WTC11 (cell line): ENCODE measurements at regions of chr13 and their contacts with region 1.

Region 1: DNA sequence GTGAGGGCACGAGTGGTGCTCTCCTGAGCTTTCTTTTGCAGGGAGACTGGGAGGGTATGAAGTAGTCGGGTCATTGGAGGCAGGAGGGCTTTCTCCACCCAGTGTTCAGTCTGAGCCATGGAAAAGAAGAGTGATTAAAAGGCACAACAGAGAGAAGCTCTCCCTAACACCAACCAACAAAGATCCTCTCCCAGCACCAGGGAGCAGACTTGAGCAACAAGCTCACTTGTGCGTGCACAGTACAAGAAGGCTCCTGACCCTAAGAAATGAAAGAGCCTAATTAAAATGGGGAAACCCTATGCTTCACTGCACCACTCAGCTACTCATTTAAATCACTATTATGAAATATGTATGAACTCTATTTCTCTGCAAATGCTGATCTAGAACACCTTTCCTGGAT is 276.3 kb upstream of the SOX21 start:
- DNase-seq: no peak
- ATAC-seq: peak; percentile 98
- H3K4me3 Mint-ChIP-seq: no peak overlapping the region
- H3K27ac Mint-ChIP-seq: no peak overlapping the region
- H3K4me1 Mint-ChIP-seq: peaks cover 34% of the 10 kb centered on the region
- H3K27me3 Mint-ChIP-seq: peaks cover 3% of the 10 kb centered on the region; the same call in 1 of the 2 replicates
- CTCF ChIP-seq: no peak

Region 2: DNA sequence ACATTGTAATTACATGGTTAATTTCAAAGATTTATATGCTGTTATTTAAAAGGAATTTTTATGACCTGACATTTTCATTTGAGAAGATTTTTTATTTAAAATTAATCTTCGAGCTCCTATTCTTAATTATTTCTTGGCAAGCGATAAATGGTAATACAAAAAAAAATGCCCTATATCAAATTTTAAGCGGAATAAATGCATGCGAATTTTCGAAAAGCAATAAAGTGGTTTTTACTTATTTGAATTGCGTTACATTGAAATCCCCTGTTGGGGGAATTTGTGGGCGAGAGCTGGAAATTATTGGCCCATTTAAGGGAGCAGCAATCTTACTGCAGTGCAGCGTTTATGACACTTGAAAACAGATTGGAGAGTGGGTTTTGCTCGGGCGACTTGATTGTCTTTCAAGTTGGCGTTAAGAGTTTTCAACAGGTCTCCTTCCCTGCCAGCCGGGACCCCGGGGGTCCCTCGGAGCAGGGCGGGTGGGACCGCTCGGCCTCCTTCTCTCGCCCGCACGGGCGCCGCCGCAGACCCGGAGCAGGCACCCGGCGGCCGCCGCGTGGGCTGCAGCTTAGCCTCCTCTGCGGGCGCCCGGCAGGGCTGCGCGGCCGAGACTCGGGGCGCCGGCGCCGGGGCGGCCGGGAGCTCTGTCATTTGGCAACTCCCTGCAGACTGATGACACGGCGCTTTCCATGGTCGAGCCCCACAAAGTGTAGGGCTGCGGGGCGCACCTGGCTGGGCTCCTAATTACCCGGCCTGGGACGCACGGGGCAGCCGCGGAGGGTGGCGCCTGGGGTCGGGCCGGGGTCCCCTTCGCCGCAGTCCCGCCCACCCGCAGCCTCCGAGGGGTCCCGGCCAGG is 21.2 kb before region 1 on chr13:
- CTCF ChIA-PET with region 1: interaction called, 19 read pairs
- POLR2A ChIA-PET with region 1: no interaction called
- DNase-seq: peak; percentile 57
- ATAC-seq: peak; percentile 68
- H3K4me3 Mint-ChIP-seq: peak overlapping the region; percentile 87
- H3K27ac Mint-ChIP-seq: no peak overlapping the region
- H3K4me1 Mint-ChIP-seq: peaks cover 51% of the 10 kb centered on the region
- H3K27me3 Mint-ChIP-seq: peaks cover 16% of the 10 kb centered on the region
- CTCF ChIP-seq: no peak

Region 3: DNA sequence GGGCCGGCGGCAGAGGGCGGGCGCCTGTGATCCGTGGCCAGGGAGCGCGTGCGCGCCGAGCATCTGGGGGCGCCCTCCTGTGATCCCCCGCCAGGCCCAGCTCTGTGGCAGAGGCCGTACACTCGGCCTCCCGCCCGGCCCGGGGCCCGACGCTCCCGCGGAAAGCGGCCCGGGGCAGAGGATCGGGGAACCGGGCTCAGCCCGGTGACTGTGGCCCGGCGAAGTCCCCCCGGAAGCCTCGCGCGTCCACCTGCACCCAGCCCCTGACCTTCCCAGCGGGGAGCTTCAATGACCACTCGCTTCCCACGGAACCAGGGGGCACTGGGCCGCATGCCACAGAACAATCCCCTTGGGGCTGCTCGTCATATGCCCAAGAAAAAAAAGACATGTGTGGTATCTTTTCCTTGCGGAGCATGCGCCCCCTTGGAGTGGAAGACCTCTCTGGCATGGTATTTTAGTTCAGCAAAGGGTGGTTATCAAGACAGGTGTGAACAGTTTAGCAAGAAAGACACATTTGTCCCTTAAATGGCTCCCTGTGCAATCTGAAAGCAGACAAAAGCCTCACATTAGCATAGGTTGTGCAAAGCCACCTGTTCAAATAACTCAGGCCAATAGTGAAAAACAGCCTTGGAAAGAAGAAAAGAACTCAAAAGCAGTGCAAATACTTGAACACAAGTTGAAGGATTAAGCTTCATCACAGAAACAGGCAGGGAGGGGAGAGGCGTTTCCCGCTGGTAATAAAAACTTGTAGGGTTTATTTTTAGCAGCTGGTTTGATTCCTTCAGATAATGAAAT is 14.6 kb after region 1 on chr13:
- CTCF ChIA-PET with region 1: interaction called, 11 read pairs
- POLR2A ChIA-PET with region 1: no interaction called
- DNase-seq: peak; percentile 29
- ATAC-seq: peak; percentile 65
- H3K4me3 Mint-ChIP-seq: peak overlapping the region; percentile 53
- H3K27ac Mint-ChIP-seq: no peak overlapping the region
- H3K4me1 Mint-ChIP-seq: peaks cover 39% of the 10 kb centered on the region
- H3K27me3 Mint-ChIP-seq: peaks cover 20% of the 10 kb centered on the region
- CTCF ChIP-seq: no peak